Caco-2 (cell line): ENCODE measurements at regions of chr6 and their contacts with region 1.

Region 1: GRCh38 chr6:9250852-9251251 is 815.5 kb upstream of the SLC35B3 start:
- DNase-seq: peak; percentile 75 to 76
- H3K4me3 ChIP-seq: no peak overlapping the region
- H3K4me3 Mint-ChIP-seq: peak overlapping the region; percentile 7
- H3K27ac Mint-ChIP-seq: no peak overlapping the region
- H3K4me1 ChIP-seq: peaks cover 27% of the 10 kb centered on the region
- H3K4me1 Mint-ChIP-seq: peaks cover 6% of the 10 kb centered on the region
- H3K27me3 ChIP-seq: no peaks in the 10 kb centered on the region
- H3K27me3 Mint-ChIP-seq: no peaks in the 10 kb centered on the region
- CTCF ChIP-seq: peak; percentile 59 to 86

Region 2: DNA sequence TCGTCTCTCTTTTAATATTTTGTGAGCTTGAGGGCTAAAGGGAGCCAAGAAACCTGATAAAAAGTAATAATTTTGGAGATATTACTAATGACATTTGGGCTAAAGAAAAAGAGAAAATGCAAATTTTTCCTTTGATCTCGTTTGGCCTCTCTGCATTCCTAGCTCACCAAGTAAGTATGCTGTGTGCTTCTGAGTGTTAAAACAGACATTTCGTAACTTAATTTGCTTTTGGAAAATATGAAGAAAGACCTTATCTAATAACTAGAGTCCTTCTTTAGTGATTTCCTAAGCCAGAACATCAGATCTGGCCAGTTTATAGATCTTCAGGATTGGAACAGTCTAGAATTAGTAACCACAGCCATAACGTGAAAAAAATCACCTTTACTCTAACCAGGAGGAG is 57.4 kb after region 1 on chr6:
- CTCF ChIA-PET with region 1: no interaction called
- POLR2A ChIA-PET with region 1: no interaction called
- intact Hi-C with region 1: loop called (anchors 2 kb)
- DNase-seq: peak in 1 of 2 experiments; percentile 55
- H3K4me3 ChIP-seq: no peak overlapping the region
- H3K4me3 Mint-ChIP-seq: no peak overlapping the region
- H3K27ac Mint-ChIP-seq: peak overlapping the region; percentile 57
- H3K4me1 ChIP-seq: peaks cover 22% of the 10 kb centered on the region
- H3K4me1 Mint-ChIP-seq: peaks cover 7% of the 10 kb centered on the region
- H3K27me3 ChIP-seq: no peaks in the 10 kb centered on the region
- H3K27me3 Mint-ChIP-seq: no peaks in the 10 kb centered on the region
- CTCF ChIP-seq: no peak

Region 3: DNA sequence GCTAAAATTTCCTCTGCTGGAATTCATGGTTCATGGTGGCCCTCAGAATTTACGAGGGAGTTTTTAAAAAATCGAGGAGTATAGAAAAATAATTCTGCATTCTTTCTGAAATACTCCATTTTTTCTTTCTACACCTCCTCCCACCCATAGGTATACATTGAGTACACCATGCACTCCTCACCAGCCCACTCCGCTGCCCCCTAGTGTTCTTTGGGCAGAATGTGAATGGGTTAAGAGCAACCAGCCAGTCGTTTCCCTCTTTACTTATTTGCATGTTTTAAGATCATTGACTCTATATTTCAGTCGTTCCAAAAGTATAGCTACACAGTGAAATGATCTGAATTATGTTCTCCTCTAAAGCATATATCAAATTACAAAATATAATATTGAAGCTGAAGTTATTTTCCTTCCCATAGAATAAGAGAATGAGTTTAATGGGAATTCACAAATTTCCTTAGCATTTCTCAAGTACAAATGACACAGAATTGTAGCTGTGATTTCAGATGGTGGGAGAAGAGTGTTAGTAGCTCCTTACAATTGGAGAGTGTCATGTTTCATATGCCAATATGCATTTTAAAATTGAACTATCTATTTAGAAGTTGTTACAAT is 162.2 kb after region 1 on chr6:
- CTCF ChIA-PET with region 1: no interaction called
- POLR2A ChIA-PET with region 1: no interaction called
- intact Hi-C with region 1: loop called (anchors 1 kb)
- DNase-seq: peak; percentile 52 to 56
- H3K4me3 ChIP-seq: no peak overlapping the region
- H3K4me3 Mint-ChIP-seq: no peak overlapping the region
- H3K27ac Mint-ChIP-seq: no peak overlapping the region
- H3K4me1 ChIP-seq: no peaks in the 10 kb centered on the region
- H3K4me1 Mint-ChIP-seq: no peaks in the 10 kb centered on the region
- H3K27me3 ChIP-seq: no peaks in the 10 kb centered on the region
- H3K27me3 Mint-ChIP-seq: no peaks in the 10 kb centered on the region
- CTCF ChIP-seq: peak; percentile 49 to 54

Region 4: GRCh38 chr6:9610620-9611415 is 360.0 kb after region 1 on chr6:
- CTCF ChIA-PET with region 1: no interaction called
- POLR2A ChIA-PET with region 1: no interaction called
- intact Hi-C with region 1: loop called (anchors 1 kb)
- DNase-seq: no peak
- H3K4me3 ChIP-seq: no peak overlapping the region
- H3K4me3 Mint-ChIP-seq: no peak overlapping the region
- H3K27ac Mint-ChIP-seq: no peak overlapping the region
- H3K4me1 ChIP-seq: no peaks in the 10 kb centered on the region
- H3K4me1 Mint-ChIP-seq: peaks cover 6% of the 10 kb centered on the region
- H3K27me3 ChIP-seq: no peaks in the 10 kb centered on the region
- H3K27me3 Mint-ChIP-seq: no peaks in the 10 kb centered on the region
- CTCF ChIP-seq: peak in 1 of 2 experiments; percentile 14

Region 5: DNA sequence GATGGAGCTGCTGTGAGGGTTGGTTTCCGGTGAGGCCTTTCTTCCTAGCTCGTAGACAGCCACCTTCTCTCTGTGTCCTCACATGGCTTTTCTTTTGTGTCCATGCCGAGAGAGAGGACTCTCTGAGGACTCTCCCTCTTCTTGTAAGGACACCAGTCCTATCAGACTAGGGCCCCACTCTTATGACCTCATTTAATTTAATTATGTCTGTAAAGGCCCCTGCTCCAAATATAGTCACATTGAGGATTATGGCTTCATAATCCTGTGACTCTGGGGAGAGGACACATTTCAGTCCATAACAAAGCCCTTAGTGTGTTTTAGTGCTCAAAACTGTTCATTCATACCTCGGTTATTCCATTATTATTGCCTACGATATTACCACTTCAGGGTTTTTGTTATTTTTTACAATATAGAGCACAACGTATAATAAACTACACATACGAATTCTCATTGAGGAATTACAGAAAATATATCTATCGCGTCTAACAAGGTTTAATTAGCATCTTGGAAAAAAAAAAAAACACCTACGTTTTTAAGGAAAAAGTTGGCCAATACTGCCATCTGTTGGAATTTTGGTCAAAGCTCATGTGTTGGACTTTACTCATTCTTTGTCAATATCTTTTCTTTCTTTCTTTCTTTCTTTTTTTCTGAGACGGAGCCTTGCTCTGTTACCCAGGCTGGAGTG is 1184.0 kb after region 1 on chr6:
- CTCF ChIA-PET with region 1: interaction called, 3 read pairs
- POLR2A ChIA-PET with region 1: no interaction called
- intact Hi-C with region 1: loop called (anchors 2 kb)
- DNase-seq: no peak
- H3K4me3 ChIP-seq: no peak overlapping the region
- H3K4me3 Mint-ChIP-seq: no peak overlapping the region
- H3K27ac Mint-ChIP-seq: no peak overlapping the region
- H3K4me1 ChIP-seq: peaks cover 9% of the 10 kb centered on the region; the same call in 1 of the 2 replicates
- H3K4me1 Mint-ChIP-seq: peaks cover 17% of the 10 kb centered on the region
- H3K27me3 ChIP-seq: no peaks in the 10 kb centered on the region
- H3K27me3 Mint-ChIP-seq: no peaks in the 10 kb centered on the region
- CTCF ChIP-seq: peak; percentile 55 to 79